IMR-90 (cell line): ENCODE measurements at regions of chr2 and their contacts with region 1.

Region 1: DNA sequence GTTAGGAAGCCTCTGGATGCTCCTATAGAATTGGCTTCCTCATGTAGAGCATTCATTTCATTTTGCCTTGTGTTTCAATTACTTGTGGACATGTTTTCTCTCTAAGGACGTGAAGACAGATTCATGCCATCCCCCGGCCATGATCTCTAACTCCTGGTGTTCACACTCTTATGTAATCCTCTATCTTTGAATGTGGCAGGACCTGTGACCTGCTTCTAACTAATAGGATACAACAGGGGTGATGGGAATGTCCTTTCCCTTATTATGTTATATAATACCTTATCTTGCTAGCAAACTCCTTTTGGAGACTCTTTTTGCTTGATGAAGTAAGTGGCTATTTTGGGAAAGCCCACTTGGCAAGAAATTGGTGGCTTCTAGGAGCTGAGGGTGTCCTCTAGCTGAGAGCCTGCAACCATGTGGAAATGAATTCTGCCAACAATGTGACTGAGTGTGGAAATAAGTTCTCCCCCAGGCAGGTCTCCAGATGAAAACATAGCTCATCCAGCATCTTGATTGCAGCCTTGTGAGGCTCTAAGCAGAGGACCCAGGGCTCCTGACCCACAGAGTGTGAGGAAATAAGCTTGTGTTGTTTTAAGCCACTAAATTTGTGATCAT is 13.8 kb downstream of the DPYSL5 start:
- DNase-seq: no peak
- ATAC-seq: no peak
- H3K4me3 ChIP-seq: no peak overlapping the region
- H3K27ac ChIP-seq: no peak overlapping the region
- H3K4me1 ChIP-seq: no peaks in the 10 kb centered on the region
- H3K27me3 ChIP-seq: peaks cover 40% of the 10 kb centered on the region
- CTCF ChIP-seq: no peak
- POLR2A ChIP-seq: no peak
- RAD21 ChIP-seq: no peak

Region 2: GRCh38 chr2:26901326-26902183 is 39.8 kb after region 1 on chr2:
- CTCF ChIA-PET with region 1: interaction called, 3 read pairs
- POLR2A ChIA-PET with region 1: interaction called, 3 read pairs
- dilution Hi-C with region 1: no loop called
- in situ Hi-C with region 1: no loop called
- intact Hi-C with region 1: loop called (anchors 5 kb)
- DNase-seq: no peak
- ATAC-seq: no peak
- H3K4me3 ChIP-seq: no peak overlapping the region
- H3K27ac ChIP-seq: no peak overlapping the region
- H3K4me1 ChIP-seq: no peaks in the 10 kb centered on the region
- H3K27me3 ChIP-seq: peaks cover 67% of the 10 kb centered on the region
- CTCF ChIP-seq: no peak
- POLR2A ChIP-seq: no peak
- RAD21 ChIP-seq: no peak

Region 3: GRCh38 chr2:26942543-26943295 is 81.0 kb after region 1 on chr2:
- CTCF ChIA-PET with region 1: no interaction called
- POLR2A ChIA-PET with region 1: no interaction called
- dilution Hi-C with region 1: no loop called
- in situ Hi-C with region 1: no loop called
- intact Hi-C with region 1: no loop called
- DNase-seq: peak; percentile 48
- ATAC-seq: peak; percentile 63
- H3K4me3 ChIP-seq: no peak overlapping the region
- H3K27ac ChIP-seq: no peak overlapping the region
- H3K4me1 ChIP-seq: peaks cover 2% of the 10 kb centered on the region; the same call in 1 of the 2 replicates
- H3K27me3 ChIP-seq: peaks cover 46% of the 10 kb centered on the region
- CTCF ChIP-seq: peak; percentile 75
- POLR2A ChIP-seq: no peak
- RAD21 ChIP-seq: peak; percentile 72